Right ventricle myocardium inferior (tissue), 1 donor: ENCODE measurements at regions of chr3 and their contacts with region 1.

Region 1: GRCh38 chr3:48795997-48796732 is 51.5 kb downstream of the PRKAR2A start:
- DNase-seq: no peak
- ATAC-seq: no peak

Region 2: DNA sequence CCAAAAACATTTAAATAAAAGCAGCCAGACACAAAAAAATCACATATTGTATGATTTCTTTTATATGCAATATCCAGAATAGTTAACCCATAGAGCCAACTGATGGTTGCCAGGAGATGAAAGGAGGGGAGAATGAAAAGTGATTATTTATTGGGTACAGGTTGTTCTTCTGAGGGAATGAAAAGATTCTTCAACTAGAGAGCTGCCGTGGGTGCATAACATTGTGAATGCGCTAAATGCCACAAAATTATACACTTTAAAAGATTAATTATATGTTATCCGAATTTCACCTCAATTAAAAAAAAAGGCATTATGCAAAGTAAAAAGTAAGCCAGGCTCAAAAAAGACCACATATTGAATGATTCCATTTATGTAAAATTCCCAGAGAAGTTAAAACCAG is 15.4 kb after region 1 on chr3:
- intact Hi-C with region 1: loop called (anchors 1 kb)
- DNase-seq: no peak
- ATAC-seq: no peak